ENCODE measurements at regions of chr11 and their contacts with region 1.

Region 1: DNA sequence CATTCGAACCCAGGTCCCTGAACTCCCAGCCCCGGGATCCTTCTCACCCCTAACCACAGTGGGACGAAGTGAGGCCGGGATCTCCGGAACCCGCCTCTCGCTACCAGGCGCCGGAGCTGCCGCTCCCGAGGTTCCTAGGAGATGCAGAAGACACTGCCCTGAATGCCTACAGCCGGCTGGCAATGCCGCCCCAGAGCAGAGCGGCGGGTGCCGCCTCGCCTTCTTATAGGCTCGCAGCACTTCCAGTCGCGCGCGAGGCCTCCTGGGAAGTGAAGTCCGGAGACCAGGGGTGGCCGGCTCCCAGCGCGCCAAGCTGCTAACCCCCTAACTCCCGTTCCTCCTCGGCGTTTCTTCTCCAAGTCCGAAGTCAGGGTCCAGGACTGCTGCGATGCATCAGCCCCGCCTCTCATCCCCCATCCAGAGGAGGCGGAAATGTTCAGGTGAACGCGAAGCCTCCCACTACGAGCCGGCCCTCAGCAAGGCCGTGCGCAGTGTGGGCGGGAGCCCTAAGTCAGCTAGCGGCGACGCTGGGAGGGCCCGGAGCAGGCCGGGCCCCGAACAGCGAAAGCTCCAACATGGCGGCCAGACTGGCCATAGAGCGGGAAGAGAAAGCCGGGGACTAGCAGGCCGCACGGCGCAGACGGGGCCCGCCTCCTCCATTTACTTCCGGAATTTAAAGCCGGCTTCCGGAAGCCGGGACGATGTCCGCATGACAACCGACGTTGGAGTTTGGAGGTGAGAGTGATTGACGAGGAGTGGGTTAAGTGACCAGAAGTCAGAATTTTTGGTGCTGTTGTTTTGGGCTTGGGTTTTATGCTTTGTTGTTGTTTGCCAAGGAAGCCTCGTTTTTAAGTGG is at the starts of genes CYB561A3 and TMEM138:
- DNase-seq: peak; percentile 86
- ATAC-seq: peak; percentile 95
- H3K4me3 Mint-ChIP-seq: peak within 1 kb of the TSS; percentile 95
- H3K27ac Mint-ChIP-seq: peak within 1 kb of the TSS; percentile 94
- H3K4me1 Mint-ChIP-seq: peaks cover 34% of the 10 kb centered on the region
- H3K27me3 Mint-ChIP-seq: no peaks in the 10 kb centered on the region
- total RNA-seq, gene CYB561A3: 43.6 to 44.7 TPM
- total RNA-seq, gene TMEM138: 53.4 to 57.7 TPM

Region 2: DNA sequence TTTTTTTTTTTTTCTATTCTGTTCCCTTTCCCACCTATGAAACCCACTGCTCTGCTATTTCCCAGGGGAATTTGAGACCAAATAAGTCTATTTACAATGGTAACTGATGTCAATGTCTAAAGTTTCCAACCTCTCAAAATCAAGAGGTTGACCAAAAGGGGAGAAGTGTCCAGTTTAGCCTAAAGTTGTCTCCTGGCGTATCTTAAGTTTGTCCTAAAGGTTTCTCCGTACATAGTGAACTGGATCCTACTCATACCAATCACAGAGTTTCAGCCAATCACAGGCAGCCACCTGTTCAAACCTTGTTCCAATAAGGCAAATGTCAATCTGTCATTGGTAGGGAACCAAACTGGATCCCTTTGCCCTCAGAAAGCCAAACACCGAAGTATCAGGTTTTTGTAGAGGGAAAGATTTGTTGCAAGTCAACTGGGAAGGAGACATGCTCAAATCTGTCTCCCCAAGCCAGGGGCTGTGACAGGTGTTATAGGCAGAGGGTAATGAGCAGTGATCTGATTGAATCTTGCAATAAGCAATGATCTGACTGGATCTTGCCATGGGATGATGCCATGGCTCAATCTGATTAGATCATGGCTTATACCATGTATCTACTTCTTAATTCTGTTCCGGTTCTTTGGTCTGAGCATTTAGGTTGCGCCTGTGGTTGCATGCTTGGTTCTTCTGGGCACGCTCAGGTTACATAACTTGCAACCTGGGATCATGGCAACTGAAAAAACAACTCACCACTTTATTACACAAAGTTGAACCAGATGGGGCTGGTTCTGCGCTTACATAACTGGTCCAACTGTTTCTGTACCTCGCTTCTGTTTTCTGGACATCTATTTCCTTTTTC is 199.6 kb before region 1 on chr11:
- POLR2A ChIA-PET with region 1: no interaction called
- DNase-seq: peak; percentile 19
- ATAC-seq: no peak
- H3K4me3 Mint-ChIP-seq: peak overlapping the region; percentile 86
- H3K27ac Mint-ChIP-seq: peak overlapping the region; percentile 88
- H3K4me1 Mint-ChIP-seq: peaks cover 33% of the 10 kb centered on the region
- H3K27me3 Mint-ChIP-seq: no peaks in the 10 kb centered on the region

Region 3: GRCh38 chr11:61294717-61295595 is 67.0 kb before region 1 on chr11 and contains the start of gene VWCE:
- POLR2A ChIA-PET with region 1: interaction called, 11 read pairs
- DNase-seq: peak; percentile 85
- ATAC-seq: peak; percentile 85
- H3K4me3 Mint-ChIP-seq: peak within 1 kb of the TSS; percentile 85
- H3K27ac Mint-ChIP-seq: peak within 1 kb of the TSS; percentile 81
- H3K4me1 Mint-ChIP-seq: peaks cover 37% of the 10 kb centered on the region
- H3K27me3 Mint-ChIP-seq: no peaks in the 10 kb centered on the region
- total RNA-seq, gene VWCE: 2.4 to 3.1 TPM

Region 4: GRCh38 chr11:61332797-61333549 is 28.9 kb before region 1 on chr11 and contains the starts of genes DDB1 and TKFC:
- POLR2A ChIA-PET with region 1: interaction called, 36 read pairs
- DNase-seq: peak; percentile 99
- ATAC-seq: peak; percentile 93
- H3K4me3 Mint-ChIP-seq: peak within 1 kb of the TSS; percentile 98
- H3K27ac Mint-ChIP-seq: peak within 1 kb of the TSS; percentile 99
- H3K4me1 Mint-ChIP-seq: peaks cover 59% of the 10 kb centered on the region
- H3K27me3 Mint-ChIP-seq: no peaks in the 10 kb centered on the region
- total RNA-seq, gene DDB1: 168 to 181 TPM
- total RNA-seq, gene TKFC: 31.5 to 34.3 TPM

Region 5: DNA sequence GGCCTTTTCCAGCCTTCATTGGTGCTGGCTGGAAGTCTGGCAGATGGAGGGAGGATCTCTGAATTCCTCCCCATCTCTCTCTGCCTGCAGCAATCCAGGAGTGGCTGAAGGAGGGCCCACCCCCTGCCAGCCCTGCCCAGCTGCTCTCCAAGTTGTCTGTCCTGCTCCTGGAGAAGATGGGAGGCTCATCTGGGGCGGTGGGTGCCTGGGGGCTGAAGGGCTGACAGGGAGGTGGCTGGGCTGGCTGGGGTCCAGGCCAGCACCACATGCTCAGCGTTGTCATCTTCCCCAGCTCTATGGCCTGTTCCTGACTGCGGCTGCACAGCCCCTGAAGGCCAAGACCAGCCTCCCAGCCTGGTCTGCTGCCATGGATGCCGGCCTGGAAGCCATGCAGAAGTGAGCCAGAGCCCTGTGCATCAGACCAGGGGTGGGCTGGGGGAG is 16.7 kb before region 1 on chr11:
- POLR2A ChIA-PET with region 1: interaction called, 11 read pairs
- DNase-seq: no peak
- ATAC-seq: no peak
- H3K4me3 Mint-ChIP-seq: no peak overlapping the region
- H3K27ac Mint-ChIP-seq: no peak overlapping the region
- H3K4me1 Mint-ChIP-seq: peaks cover 6% of the 10 kb centered on the region
- H3K27me3 Mint-ChIP-seq: no peaks in the 10 kb centered on the region

Region 6: GRCh38 chr11:61392981-61393595 is 31.2 kb after region 1 on chr11:
- POLR2A ChIA-PET with region 1: interaction called, 20 read pairs
- DNase-seq: no peak
- ATAC-seq: peak; percentile 25
- H3K4me3 Mint-ChIP-seq: peak overlapping the region; percentile 91
- H3K27ac Mint-ChIP-seq: peak overlapping the region; percentile 90
- H3K4me1 Mint-ChIP-seq: peaks cover 22% of the 10 kb centered on the region
- H3K27me3 Mint-ChIP-seq: no peaks in the 10 kb centered on the region

Region 7: GRCh38 chr11:61429691-61430582 is 68.0 kb after region 1 on chr11 and contains the starts of genes CPSF7 and SDHAF2:
- POLR2A ChIA-PET with region 1: interaction called, 25 read pairs
- DNase-seq: peak; percentile 99
- ATAC-seq: peak; percentile 87
- H3K4me3 Mint-ChIP-seq: peak within 1 kb of the TSS; percentile 99
- H3K27ac Mint-ChIP-seq: peak within 1 kb of the TSS; percentile 100
- H3K4me1 Mint-ChIP-seq: peaks cover 51% of the 10 kb centered on the region
- H3K27me3 Mint-ChIP-seq: no peaks in the 10 kb centered on the region
- total RNA-seq, gene CPSF7: 115 to 118 TPM
- total RNA-seq, gene SDHAF2: 48.5 to 53.1 TPM